ENCODE measurements at regions of chr2 and their contacts with region 1.

Region 1: DNA sequence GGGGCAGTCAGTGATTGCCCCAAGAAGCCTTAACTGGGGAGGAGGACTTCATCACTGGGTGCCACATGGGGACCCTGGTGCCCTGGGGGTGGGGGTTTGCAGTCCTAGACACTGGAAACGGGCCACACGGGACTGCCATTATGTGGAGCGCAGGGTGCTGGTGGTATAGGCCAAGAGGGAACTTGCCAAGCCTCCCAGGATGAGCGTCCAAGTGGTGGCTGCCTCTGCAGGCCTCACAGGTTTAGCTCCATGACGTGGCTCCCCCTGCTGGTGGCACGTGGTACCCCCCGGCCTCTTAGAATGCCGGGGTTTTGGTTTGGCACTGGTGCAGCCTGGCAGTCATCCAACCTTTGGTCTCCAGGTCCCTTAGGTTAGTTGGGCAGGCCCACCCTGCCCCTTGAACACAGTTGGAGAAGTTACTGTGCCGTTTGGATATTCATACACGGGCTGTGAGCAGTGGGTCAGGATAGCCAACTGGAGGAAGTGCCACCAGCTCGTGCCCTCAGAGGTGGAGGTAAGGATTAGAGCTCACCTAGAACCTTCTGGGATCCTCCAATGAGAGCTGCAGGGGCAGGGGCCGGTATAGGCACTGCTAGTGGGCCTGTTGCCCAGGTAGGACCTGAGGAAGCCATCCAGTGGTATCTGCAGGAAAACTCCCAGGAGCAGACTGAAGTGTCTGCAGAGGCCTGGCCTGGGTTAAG is 5.6 kb downstream of the PTMA start:
- DNase-seq: peak; percentile 74
- H3K4me3 ChIP-seq: no peak overlapping the region
- H3K27ac ChIP-seq: no peak overlapping the region
- H3K4me1 ChIP-seq: peaks cover 16% of the 10 kb centered on the region
- H3K27me3 ChIP-seq: no peaks in the 10 kb centered on the region
- CTCF ChIP-seq: peak; percentile 87 to 97

Region 2: GRCh38 chr2:231648587-231649174 is 65.2 kb before region 1 on chr2:
- CTCF ChIA-PET with region 1: no interaction called
- dilution Hi-C with region 1: no loop called
- in situ Hi-C with region 1: no loop called
- intact Hi-C with region 1: loop called (anchors 1 kb)
- DNase-seq: peak; percentile 52
- H3K4me3 ChIP-seq: no peak overlapping the region
- H3K27ac ChIP-seq: no peak overlapping the region
- H3K4me1 ChIP-seq: peaks cover 6% of the 10 kb centered on the region
- H3K27me3 ChIP-seq: no peaks in the 10 kb centered on the region
- CTCF ChIP-seq: peak; percentile 59 to 86

Measured in mammary epithelial cell (primary cell).